Transverse colon (tissue), 4 donors: ENCODE measurements at regions of chr3 and their contacts with region 1.

Region 1: GRCh38 chr3:73624821-73625665 is at the start of gene PDZRN3:
- DNase-seq: peak; percentile 65
- H3K4me3 ChIP-seq: peak within 1 kb of the TSS; percentile 72 to 81 (median 75)
- H3K27ac ChIP-seq: peak within 1 kb of the TSS; percentile 86 to 93 (median 90)
- H3K4me1 ChIP-seq: peaks cover 0 to 23% (median 17%) of the 10 kb centered on the region in 4 donors
- H3K27me3 ChIP-seq: no peaks in the 10 kb centered on the region
- CTCF ChIP-seq: peak in 1 of 5 experiments; percentile 12
- EP300 ChIP-seq: no peak
- POLR2A ChIP-seq: no peak
- total RNA-seq, gene PDZRN3: 31.9 to 191 (median 75.3) TPM

Region 2: GRCh38 chr3:73419179-73419803 is 205.8 kb before region 1 on chr3:
- in situ Hi-C with region 1: no loop called
- intact Hi-C with region 1: loop called (anchors 10 kb)
- DNase-seq: no peak
- H3K4me3 ChIP-seq: no peak overlapping the region
- H3K27ac ChIP-seq: peak overlapping the region; percentile 56 to 81 (median 70)
- H3K4me1 ChIP-seq: peaks cover 6 to 34% (median 13%) of the 10 kb centered on the region in 4 donors
- H3K27me3 ChIP-seq: no peaks in the 10 kb centered on the region
- CTCF ChIP-seq: peak in 3 of 5 experiments; percentile 19 to 25 (median 22)
- EP300 ChIP-seq: no peak
- POLR2A ChIP-seq: no peak

Region 3: GRCh38 chr3:73502609-73503583 is 122.1 kb before region 1 on chr3:
- in situ Hi-C with region 1: loop called in 1 of 4 experiments (anchors 25 kb)
- intact Hi-C with region 1: no loop called
- DNase-seq: peak; percentile 75
- H3K4me3 ChIP-seq: no peak overlapping the region
- H3K27ac ChIP-seq: peak overlapping the region; percentile 15 to 35 (median 32)
- H3K4me1 ChIP-seq: peaks cover 10 to 28% (median 14%) of the 10 kb centered on the region in 4 donors
- H3K27me3 ChIP-seq: no peaks in the 10 kb centered on the region
- CTCF ChIP-seq: peak; percentile 77 to 87 (median 79)
- EP300 ChIP-seq: no peak
- POLR2A ChIP-seq: no peak

Region 4: DNA sequence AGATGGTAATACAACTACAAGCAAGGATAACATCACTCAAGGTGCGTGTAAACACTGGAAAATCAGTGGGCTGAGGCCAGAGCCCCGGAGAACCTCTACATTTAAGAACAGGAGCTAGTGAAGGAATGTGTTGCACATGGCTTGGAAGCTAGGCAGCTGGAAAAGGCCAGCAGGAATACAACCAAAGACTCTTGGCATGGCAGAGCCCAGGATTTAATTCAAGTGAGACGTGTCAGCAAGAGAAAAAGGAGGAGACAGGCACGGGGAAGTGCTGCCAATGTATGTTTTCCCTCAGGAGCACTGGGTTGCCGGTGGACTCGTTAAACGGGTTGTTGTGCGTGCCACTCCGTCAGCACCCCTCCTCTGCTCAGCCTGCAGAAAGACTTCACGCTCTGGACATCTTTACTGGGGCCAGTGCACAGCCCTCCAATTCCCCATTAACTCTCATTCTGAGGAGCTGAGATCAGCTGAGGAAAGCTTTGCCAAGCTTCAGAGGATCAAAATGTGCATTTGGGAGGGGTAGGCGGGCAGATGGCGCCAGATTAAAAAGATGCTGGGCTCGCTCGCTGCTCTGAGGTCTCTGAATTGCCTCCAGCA is 104.1 kb before region 1 on chr3:
- in situ Hi-C with region 1: loop called in 1 of 4 experiments (anchors 25 kb)
- intact Hi-C with region 1: loop called (anchors 5 kb)
- DNase-seq: peak; percentile 63
- H3K4me3 ChIP-seq: peak overlapping the region in 2 of 4 donors; percentile 13 to 30
- H3K27ac ChIP-seq: peak overlapping the region; percentile 77 to 86 (median 84)
- H3K4me1 ChIP-seq: peaks cover 20 to 65% (median 45%) of the 10 kb centered on the region in 4 donors
- H3K27me3 ChIP-seq: no peaks in the 10 kb centered on the region
- CTCF ChIP-seq: no peak
- EP300 ChIP-seq: peak; percentile 89
- POLR2A ChIP-seq: no peak

Region 5: GRCh38 chr3:73727117-73727821 is 102.2 kb after region 1 on chr3:
- in situ Hi-C with region 1: no loop called
- intact Hi-C with region 1: loop called (anchors 2 kb)
- DNase-seq: no peak
- H3K4me3 ChIP-seq: no peak overlapping the region
- H3K27ac ChIP-seq: peak overlapping the region; percentile 60 to 79 (median 72)
- H3K4me1 ChIP-seq: peaks cover 0 to 16% (median 6%) of the 10 kb centered on the region in 4 donors
- H3K27me3 ChIP-seq: no peaks in the 10 kb centered on the region
- CTCF ChIP-seq: no peak
- EP300 ChIP-seq: peak; percentile 39
- POLR2A ChIP-seq: no peak

Region 6: DNA sequence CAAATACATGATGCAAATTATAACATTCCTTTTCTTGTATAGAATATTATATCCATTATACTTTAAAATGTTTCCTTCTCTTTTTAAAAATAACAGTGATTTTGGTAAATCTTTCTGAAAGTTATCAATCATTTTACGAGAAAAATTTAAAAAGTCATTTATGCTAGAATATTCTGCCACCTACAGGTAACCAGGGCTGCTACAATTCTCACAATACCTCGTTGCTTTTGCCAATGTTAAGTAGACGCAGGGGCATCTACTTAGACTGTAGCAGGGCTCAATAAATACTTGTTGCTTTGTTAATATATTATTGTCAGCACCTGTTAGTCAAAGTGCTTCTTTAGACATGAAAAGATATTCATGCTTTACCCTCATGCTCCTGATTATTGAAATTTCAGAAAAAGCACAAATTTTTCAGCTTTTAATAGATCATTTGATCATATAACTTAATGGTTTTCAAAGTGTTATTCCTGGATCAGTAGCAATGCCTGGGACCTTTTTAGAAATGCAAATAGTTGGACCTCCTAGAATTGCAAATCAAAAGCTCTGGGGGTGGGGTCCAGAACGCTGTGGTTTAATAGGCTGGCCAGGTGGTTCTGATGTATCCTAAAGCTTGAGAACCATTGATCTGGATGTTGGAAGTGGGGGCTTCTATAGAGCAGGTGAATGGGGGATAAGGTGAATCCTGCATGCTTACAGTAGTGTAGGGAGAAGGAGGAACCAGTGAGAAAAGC is 223.3 kb after region 1 on chr3:
- in situ Hi-C with region 1: no loop called
- intact Hi-C with region 1: loop called (anchors 10 kb)
- DNase-seq: no peak
- H3K4me3 ChIP-seq: no peak overlapping the region
- H3K27ac ChIP-seq: no peak overlapping the region
- H3K4me1 ChIP-seq: no peaks in the 10 kb centered on the region
- H3K27me3 ChIP-seq: no peaks in the 10 kb centered on the region
- CTCF ChIP-seq: peak; percentile 61 to 72 (median 63)
- EP300 ChIP-seq: no peak
- POLR2A ChIP-seq: no peak

Region 7: DNA sequence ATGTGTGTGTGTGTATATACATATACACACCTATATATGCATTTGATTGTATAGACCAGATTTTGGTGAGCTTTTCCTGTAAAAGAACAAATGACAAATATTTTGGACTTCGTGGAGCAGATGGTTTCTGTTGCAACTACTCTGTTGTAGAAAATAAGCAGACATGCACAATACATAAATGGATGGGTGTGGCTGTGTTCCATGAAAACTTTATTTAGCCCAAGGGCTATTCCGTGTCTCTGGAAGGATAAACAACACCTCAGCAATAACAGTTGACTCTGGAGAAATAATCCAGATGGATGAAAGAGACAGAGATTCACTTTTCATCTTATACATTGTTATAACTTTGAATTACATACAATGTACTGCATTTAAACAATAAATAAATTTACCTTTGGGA is 548.0 kb after region 1 on chr3:
- in situ Hi-C with region 1: no loop called
- intact Hi-C with region 1: no loop called
- DNase-seq: no peak
- H3K4me3 ChIP-seq: no peak overlapping the region
- H3K27ac ChIP-seq: no peak overlapping the region
- H3K4me1 ChIP-seq: no peaks in the 10 kb centered on the region
- H3K27me3 ChIP-seq: no peaks in the 10 kb centered on the region
- CTCF ChIP-seq: no peak
- EP300 ChIP-seq: no peak
- POLR2A ChIP-seq: no peak